Right cardiac atrium (tissue), 5 donors: ENCODE measurements at regions of chr10 and their contacts with region 1.

Region 1: GRCh38 chr10:47087667-47088066 is 176.4 kb downstream of the PTPN20 start:
- DNase-seq: no peak
- ATAC-seq: no peak
- H3K4me3 ChIP-seq: no peak overlapping the region
- H3K27ac ChIP-seq: no peak overlapping the region
- H3K4me1 ChIP-seq: no peaks in the 10 kb centered on the region
- H3K27me3 ChIP-seq: no peaks in the 10 kb centered on the region

Region 2: DNA sequence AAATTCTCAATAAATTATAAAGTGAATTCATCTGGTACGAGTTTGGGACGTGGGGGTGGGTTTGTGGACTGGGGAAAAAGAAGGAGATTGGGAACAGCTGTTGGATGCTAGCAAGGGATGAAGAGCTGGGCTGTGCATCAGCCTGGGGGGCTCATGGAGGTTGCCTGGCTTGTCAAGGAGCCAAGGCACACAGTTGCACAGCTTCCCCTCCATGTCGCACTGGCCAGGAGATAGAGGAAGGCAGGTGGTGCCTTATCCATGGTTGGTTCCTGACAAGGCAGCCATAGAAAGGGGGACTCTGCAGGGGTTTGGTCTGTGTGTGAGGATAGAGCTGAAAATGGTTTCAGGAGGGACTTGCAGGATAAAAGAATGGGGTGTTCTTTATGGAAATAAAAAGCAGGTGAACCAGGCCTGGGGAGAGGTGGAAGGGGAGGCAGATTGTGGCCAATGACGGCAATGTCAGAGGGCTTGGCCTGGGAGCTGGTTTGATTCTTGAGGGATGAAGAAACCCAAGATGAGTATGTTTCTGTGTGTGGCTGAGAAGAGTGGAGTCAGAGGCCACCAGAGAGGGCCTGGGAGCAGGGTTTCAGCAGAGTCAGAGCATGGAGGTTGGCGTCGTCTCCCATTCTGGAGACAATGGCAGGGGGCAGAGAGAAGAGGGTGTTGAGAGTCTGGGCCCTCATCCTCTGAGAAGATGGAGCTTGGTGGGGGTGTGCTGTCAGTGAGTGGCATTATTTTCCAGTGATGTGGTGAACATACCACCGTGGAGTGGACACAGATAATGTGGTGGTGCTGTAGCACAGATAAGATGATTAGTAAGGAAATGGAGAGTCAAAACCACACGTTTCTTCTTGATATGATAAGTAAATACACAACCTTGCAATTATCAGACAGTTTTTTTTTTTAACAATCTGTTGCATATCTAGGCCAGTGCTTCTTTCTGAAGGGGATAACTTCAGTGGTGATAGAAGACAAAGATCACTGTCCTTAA is 68.2 kb before region 1 on chr10:
- intact Hi-C with region 1: loop called in 1 of 4 experiments (anchors 2 kb)
- DNase-seq: no peak
- ATAC-seq: no peak
- H3K4me3 ChIP-seq: no peak overlapping the region
- H3K27ac ChIP-seq: no peak overlapping the region
- H3K4me1 ChIP-seq: no peaks in the 10 kb centered on the region
- H3K27me3 ChIP-seq: no peaks in the 10 kb centered on the region